ENCODE measurements at regions of chr9 and their contacts with region 1.

Region 1: DNA sequence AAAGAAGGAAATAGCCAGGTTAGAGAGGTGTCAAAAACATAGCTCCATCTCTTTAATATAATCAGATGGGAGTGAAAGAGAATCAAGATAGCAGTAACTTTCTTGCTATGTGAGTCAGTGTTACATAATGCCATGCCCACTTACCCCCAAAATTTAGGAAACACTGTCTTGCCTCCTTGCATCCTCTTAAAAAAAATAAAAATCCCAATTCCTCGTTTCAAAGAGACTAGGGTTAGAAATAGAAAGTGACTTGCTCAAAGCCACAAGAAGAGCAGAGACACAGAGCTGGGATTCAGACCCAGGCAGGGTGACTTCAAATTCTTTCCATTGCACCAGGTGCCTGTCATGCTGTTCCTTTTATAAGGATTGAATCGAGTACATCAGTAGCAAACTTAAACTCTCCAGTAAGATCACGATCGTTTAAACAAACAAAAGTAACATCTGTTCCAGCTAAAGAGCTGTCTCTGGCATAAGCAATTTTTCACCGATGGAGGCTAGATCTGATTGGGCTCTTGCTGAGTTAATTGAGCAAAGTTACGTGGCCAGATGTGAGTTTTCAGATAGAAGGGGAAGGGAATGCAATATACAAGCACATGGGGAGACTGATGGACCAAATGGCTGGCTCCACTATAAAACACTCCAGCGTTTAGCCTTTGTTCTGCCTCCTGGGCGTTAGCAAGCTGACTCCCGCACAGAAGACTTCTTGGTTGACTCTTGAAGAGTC is 176.9 kb downstream of the PALM2AKAP2 start:
- DNase-seq: no peak
- H3K4me3 Mint-ChIP-seq: no peak overlapping the region
- H3K27ac Mint-ChIP-seq: no peak overlapping the region
- H3K4me1 Mint-ChIP-seq: peaks cover 39% of the 10 kb centered on the region
- H3K27me3 Mint-ChIP-seq: peaks cover 19% of the 10 kb centered on the region

Region 2: DNA sequence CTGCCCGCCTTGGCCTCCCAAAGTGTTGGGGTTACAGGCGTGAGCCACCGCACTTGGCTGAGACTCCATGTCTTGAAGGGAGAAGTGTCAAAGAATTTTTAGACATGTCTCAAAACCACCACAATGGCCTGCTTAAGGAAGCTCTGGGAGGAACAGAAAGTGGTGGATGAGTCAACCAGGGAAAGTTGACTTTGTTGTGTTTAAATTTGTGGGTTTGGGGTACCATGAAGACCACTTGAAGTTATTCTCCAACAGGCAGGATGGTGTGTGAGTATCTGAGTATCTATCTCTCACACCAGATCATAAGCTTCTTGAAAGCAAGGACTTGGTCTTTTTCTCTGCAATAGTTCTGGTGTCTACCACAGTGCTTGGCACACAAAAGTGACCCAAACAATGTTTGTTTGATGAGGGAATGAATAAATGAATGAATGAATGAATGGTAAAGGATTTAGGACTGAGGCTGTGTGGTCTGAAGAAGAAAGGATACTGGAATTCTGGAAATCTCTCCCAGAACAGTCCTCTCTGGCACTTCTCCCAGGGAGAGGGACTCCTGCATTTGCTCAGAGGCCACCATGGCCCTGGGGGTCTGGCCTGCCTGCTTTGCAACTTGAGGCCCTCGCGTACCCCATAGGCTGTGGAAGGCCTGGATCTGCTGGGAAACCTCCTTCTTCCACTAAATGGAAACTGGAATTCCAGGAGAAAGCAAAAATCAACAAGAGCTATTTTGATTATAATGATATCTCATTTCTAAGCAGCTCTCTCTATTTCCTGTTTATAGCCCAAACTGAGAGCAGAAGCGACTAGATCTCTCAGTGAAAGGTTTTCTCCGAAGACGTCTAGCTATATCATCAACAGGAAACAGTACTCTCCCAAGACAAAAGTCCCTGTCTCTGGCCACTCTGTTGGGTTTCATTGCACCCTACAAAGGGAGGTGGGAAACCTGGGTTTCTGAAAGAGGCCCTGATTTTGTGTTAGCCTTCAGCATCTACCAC is 11.1 kb after region 1 on chr9:
- CTCF ChIA-PET with region 1: interaction called, 10 read pairs
- POLR2A ChIA-PET with region 1: interaction called, 6 read pairs
- DNase-seq: peak; percentile 31
- H3K4me3 Mint-ChIP-seq: peak overlapping the region; percentile 1
- H3K27ac Mint-ChIP-seq: peak overlapping the region; percentile 92
- H3K4me1 Mint-ChIP-seq: peaks cover 73% of the 10 kb centered on the region
- H3K27me3 Mint-ChIP-seq: peaks cover 8% of the 10 kb centered on the region

Measured in activated CD4-positive, alpha-beta T cell treated with anti-CD3 and anti-CD28 coated beads, Interleukin-2, amount 10 ng/mL, durations not matched to agents 7 days and 5 days (primary cell).